Activated naive CD4-positive, alpha-beta T cell treated with anti-CD3 and anti-CD28 coated beads for 36 hours (primary cell): ENCODE measurements at regions of chr17 and their contacts with region 1.

Region 1: GRCh38 chr17:50931144-50931908 is 65.2 kb upstream of the TOB1 start:
- DNase-seq: peak; percentile 48
- H3K4me3 Mint-ChIP-seq: peak overlapping the region; percentile 75
- H3K27ac Mint-ChIP-seq: peak overlapping the region; percentile 78
- H3K4me1 Mint-ChIP-seq: peaks cover 23% of the 10 kb centered on the region
- H3K27me3 Mint-ChIP-seq: no peaks in the 10 kb centered on the region

Region 2: GRCh38 chr17:50686494-50687199 is 244.7 kb before region 1 on chr17:
- CTCF ChIA-PET with region 1: no interaction called
- intact Hi-C with region 1: no loop called
- DNase-seq: no peak
- H3K4me3 Mint-ChIP-seq: no peak overlapping the region
- H3K27ac Mint-ChIP-seq: no peak overlapping the region
- H3K4me1 Mint-ChIP-seq: no peaks in the 10 kb centered on the region
- H3K27me3 Mint-ChIP-seq: no peaks in the 10 kb centered on the region

Region 3: GRCh38 chr17:50887705-50888245 is 43.6 kb before region 1 on chr17:
- CTCF ChIA-PET with region 1: interaction called, 3 read pairs
- intact Hi-C with region 1: loop called (anchors 1 kb)
- DNase-seq: no peak
- H3K4me3 Mint-ChIP-seq: no peak overlapping the region
- H3K27ac Mint-ChIP-seq: no peak overlapping the region
- H3K4me1 Mint-ChIP-seq: peaks cover 20% of the 10 kb centered on the region
- H3K27me3 Mint-ChIP-seq: no peaks in the 10 kb centered on the region

Region 4: GRCh38 chr17:50909765-50910605 is 21.3 kb before region 1 on chr17:
- CTCF ChIA-PET with region 1: no interaction called
- intact Hi-C with region 1: loop called (anchors 2 kb)
- DNase-seq: peak; percentile 91
- H3K4me3 Mint-ChIP-seq: no peak overlapping the region
- H3K27ac Mint-ChIP-seq: peak overlapping the region; percentile 60
- H3K4me1 Mint-ChIP-seq: peaks cover 67% of the 10 kb centered on the region
- H3K27me3 Mint-ChIP-seq: no peaks in the 10 kb centered on the region

Region 5: GRCh38 chr17:50919321-50920085 is 11.8 kb before region 1 on chr17:
- CTCF ChIA-PET with region 1: interaction called, 5 read pairs
- intact Hi-C with region 1: loop called (anchors 1 kb)
- DNase-seq: peak; percentile 91
- H3K4me3 Mint-ChIP-seq: peak overlapping the region; percentile 50
- H3K27ac Mint-ChIP-seq: peak overlapping the region; percentile 86
- H3K4me1 Mint-ChIP-seq: peaks cover 56% of the 10 kb centered on the region
- H3K27me3 Mint-ChIP-seq: no peaks in the 10 kb centered on the region

Region 6: DNA sequence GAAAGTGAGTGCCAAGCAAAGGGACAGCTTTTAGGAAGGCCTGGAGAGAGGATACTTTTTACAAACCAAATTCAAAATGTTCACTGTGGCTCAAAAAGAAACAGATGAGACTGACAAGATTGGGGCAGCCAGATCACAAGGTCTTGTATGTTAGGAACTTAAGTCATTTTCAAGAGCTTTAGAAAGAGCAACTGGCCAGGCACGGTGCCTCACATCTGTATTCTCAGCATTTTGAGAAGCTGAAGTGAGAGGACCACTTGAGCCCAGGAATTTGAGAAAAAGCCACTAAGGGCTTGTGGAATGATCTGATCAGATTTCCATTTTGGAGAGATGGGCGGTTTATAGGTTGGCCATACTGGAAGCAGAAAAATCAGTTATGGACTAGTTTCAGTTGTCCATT is 172.1 kb after region 1 on chr17:
- CTCF ChIA-PET with region 1: no interaction called
- intact Hi-C with region 1: no loop called
- DNase-seq: no peak
- H3K4me3 Mint-ChIP-seq: no peak overlapping the region
- H3K27ac Mint-ChIP-seq: no peak overlapping the region
- H3K4me1 Mint-ChIP-seq: peaks cover 3% of the 10 kb centered on the region
- H3K27me3 Mint-ChIP-seq: no peaks in the 10 kb centered on the region